Naive thymus-derived CD4-positive, alpha-beta T cell (primary cell): ENCODE measurements at regions of chr13 and their contacts with region 1.

Region 1: GRCh38 chr13:97018029-97018831 is 24.0 kb upstream of the OXGR1 start:
- DNase-seq: peak in 5 of 9 donors; percentile 25 to 45 (median 30)
- ATAC-seq: peak; percentile 69
- H3K4me3 ChIP-seq: no peak overlapping the region
- H3K4me3 Mint-ChIP-seq: peak overlapping the region in 1 of 10 donors; percentile 23
- H3K27ac ChIP-seq: no peak overlapping the region
- H3K27ac Mint-ChIP-seq: no peak overlapping the region
- H3K4me1 ChIP-seq: no peaks in the 10 kb centered on the region
- H3K4me1 Mint-ChIP-seq: peaks cover 4 to 13% (median 7%) of the 10 kb centered on the region in 7 donors
- H3K27me3 ChIP-seq: no peaks in the 10 kb centered on the region
- H3K27me3 Mint-ChIP-seq: peaks cover 26 to 65% (median 39%) of the 10 kb centered on the region in 5 donors

Region 2: DNA sequence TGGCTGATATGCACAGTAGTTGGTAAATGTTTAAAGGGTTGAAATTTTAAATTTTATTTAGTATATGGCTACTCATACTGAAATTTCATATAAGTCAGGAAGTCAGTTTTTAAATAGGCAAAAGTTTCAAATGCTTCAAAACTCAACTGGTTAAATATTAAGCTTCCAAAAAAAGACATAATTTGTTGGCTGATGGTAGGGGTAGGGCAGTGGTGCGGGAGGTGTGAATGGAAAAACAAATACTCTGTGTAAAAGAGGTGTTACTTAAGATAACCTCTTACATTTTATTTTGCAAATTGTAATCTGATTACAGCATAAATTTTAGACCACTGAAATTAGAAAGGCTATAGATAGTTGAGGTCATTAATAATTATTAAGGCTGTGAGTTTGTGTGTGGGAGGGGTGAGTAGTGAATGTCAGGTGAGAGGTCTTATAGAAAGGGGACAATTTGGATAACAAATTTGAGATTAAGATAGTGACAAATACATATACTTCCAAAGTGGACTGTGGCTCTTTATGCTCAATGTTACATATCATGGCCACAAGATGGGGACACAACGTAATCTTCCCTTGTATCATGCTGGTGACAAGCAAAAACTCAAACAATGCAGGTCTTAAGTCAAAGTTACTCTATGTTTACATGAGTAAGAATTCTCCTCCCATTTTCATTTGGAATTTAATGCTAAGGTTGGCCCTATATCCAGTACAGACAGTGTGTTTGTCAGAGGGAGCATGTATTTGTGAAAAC is 12.6 kb after region 1 on chr13:
- CTCF ChIA-PET with region 1: no interaction called
- POLR2A ChIA-PET with region 1: no interaction called
- intact Hi-C with region 1: loop called (anchors 1 kb)
- DNase-seq: no peak
- ATAC-seq: no peak
- H3K4me3 ChIP-seq: no peak overlapping the region
- H3K4me3 Mint-ChIP-seq: no peak overlapping the region
- H3K27ac ChIP-seq: no peak overlapping the region
- H3K27ac Mint-ChIP-seq: no peak overlapping the region
- H3K4me1 ChIP-seq: no peaks in the 10 kb centered on the region
- H3K4me1 Mint-ChIP-seq: peaks cover 0 to 2% (median 0%) of the 10 kb centered on the region in 7 donors
- H3K27me3 ChIP-seq: no peaks in the 10 kb centered on the region
- H3K27me3 Mint-ChIP-seq: peaks cover 7 to 37% (median 29%) of the 10 kb centered on the region in 5 donors

Region 3: GRCh38 chr13:97344265-97345175 is 326.3 kb after region 1 on chr13:
- CTCF ChIA-PET with region 1: no interaction called
- POLR2A ChIA-PET with region 1: no interaction called
- intact Hi-C with region 1: loop called (anchors 5 kb)
- DNase-seq: peak in 6 of 9 donors; percentile 22 to 53 (median 39)
- ATAC-seq: peak; percentile 54
- H3K4me3 ChIP-seq: no peak overlapping the region
- H3K4me3 Mint-ChIP-seq: no peak overlapping the region
- H3K27ac ChIP-seq: no peak overlapping the region
- H3K27ac Mint-ChIP-seq: no peak overlapping the region
- H3K4me1 ChIP-seq: no peaks in the 10 kb centered on the region
- H3K4me1 Mint-ChIP-seq: peaks cover 0 to 4% (median 0%) of the 10 kb centered on the region in 7 donors
- H3K27me3 ChIP-seq: no peaks in the 10 kb centered on the region
- H3K27me3 Mint-ChIP-seq: no peaks in the 10 kb centered on the region

Region 4: GRCh38 chr13:97810152-97810551 is 791.9 kb after region 1 on chr13:
- CTCF ChIA-PET with region 1: no interaction called
- POLR2A ChIA-PET with region 1: no interaction called
- intact Hi-C with region 1: loop called in 1 of 2 experiments (anchors 10 kb)
- DNase-seq: no peak
- ATAC-seq: no peak
- H3K4me3 ChIP-seq: no peak overlapping the region
- H3K4me3 Mint-ChIP-seq: no peak overlapping the region
- H3K27ac ChIP-seq: no peak overlapping the region
- H3K27ac Mint-ChIP-seq: no peak overlapping the region
- H3K4me1 ChIP-seq: no peaks in the 10 kb centered on the region
- H3K4me1 Mint-ChIP-seq: no peaks in the 10 kb centered on the region
- H3K27me3 ChIP-seq: no peaks in the 10 kb centered on the region
- H3K27me3 Mint-ChIP-seq: peaks cover 0 to 37% (median 28%) of the 10 kb centered on the region in 5 donors